ENCODE measurements at regions of chr3 and their contacts with region 1.

Region 1: DNA sequence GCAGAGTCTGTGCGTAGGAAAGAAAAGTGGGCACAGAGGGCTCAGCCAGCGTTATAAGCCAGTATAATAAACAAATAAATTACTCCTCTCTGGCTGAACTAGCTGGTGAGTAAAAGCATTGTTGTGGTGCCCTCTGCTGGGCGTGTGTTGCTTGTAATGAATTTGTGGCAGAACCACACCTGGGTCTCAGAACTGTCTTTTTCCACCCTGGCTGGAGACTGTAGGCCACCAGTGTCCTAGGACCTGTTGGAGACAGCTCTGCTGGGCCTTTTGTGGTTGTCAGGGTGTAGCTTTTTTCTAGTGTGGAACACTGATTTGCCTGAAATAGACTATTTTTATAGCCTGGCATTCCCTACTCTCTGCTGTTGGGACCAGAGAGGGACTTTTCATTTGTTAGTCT is 130.5 kb upstream of the EIF1B start:
- DNase-seq: peak; percentile 74
- ATAC-seq: peak; percentile 43

Region 2: GRCh38 chr3:39541917-39542329 is 637.1 kb before region 1 on chr3:
- intact Hi-C with region 1: loop called (anchors 5 kb)
- DNase-seq: no peak
- ATAC-seq: no peak

Region 3: GRCh38 chr3:39707314-39707909 is 471.6 kb before region 1 on chr3:
- intact Hi-C with region 1: loop called (anchors 5 kb)
- DNase-seq: no peak
- ATAC-seq: no peak

Region 4: GRCh38 chr3:40247714-40248454 is 68.9 kb after region 1 on chr3:
- intact Hi-C with region 1: no loop called
- DNase-seq: no peak
- ATAC-seq: no peak